Activated CD8-positive, alpha-beta memory T cell treated with anti-CD3 and anti-CD28 coated beads, Interleukin-2, amount 10 ng/mL, durations not matched to agents 7 days and 5 days (primary cell): ENCODE measurements at regions of chr19 and their contacts with region 1.

Region 1: GRCh38 chr19:18328340-18329034 is 5.6 kb upstream of the LSM4 start:
- DNase-seq: peak; percentile 95
- ATAC-seq: peak; percentile 100
- H3K4me3 Mint-ChIP-seq: peak overlapping the region; percentile 66
- H3K27ac Mint-ChIP-seq: peak overlapping the region; percentile 29
- H3K4me1 Mint-ChIP-seq: peaks cover 23% of the 10 kb centered on the region
- H3K27me3 Mint-ChIP-seq: no peaks in the 10 kb centered on the region

Region 2: DNA sequence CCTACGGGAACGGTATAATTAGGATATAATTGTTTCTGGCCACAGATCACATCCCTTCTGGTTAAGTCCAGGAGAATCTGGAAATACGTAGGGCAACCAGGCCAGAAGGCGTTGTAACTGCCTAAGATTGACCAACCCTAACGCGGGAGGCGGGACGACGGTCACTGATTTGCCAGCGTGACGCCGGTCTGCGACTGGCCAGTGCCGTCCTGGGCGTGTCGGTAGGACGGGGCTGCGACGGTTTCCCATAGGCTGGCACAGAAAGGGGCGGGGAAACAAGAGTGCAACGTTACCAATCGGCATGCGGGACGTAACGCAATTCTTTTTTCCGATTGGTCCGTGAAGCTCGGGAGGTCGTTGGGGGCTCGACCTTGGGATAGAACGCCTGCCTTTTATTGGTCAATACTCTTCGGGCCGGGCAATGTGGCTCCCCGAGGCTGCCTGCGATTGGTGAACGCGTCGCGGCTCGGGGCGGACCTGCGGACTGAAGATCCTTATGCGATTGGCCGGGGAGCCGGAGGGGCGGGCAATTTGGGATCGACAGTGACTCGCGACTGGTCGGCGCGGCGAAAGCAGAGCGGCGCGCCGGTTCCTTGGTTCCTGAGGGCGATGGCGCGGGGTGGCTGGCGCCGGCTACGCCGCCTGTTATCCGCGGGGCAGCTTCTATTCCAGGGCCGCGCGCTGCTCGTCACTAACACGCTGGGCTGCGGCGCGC is 135.7 kb before region 1 on chr19 and contains the start of gene MPV17L2:
- CTCF ChIA-PET with region 1: interaction called, 10 read pairs
- DNase-seq: peak; percentile 100
- ATAC-seq: peak; percentile 94
- H3K4me3 Mint-ChIP-seq: peak within 1 kb of the TSS; percentile 82
- H3K27ac Mint-ChIP-seq: peak within 1 kb of the TSS; percentile 93
- H3K4me1 Mint-ChIP-seq: peaks cover 28% of the 10 kb centered on the region
- H3K27me3 Mint-ChIP-seq: peaks cover 3% of the 10 kb centered on the region
- total RNA-seq, gene MPV17L2: 8.2 to 12.9 TPM

Region 3: DNA sequence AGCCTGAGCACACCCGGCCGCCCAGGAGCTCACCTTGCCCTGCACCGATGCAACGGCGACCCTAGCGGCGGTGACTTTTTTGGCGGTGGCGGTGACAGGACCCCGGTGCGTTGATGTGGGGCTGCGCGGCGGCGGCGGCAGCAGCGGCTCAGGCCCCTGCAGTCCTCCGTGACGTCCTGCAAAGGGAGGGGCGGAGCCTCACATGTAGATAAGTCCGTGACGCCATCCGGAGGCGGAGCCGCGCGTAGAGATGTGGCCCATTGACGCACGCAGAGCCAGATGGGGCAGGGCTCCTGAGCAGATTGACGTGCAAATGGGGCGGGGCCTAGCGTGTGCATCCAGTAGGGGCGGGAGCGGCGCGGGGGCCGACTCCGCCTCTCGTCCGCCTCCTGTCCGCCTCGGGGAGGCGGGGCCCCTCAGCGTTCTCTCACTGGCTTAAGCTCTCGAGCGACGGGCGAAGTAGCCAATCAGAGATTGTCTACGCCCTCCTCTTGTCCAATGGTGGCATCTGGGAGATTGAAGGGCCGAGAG is 124.6 kb before region 1 on chr19 and contains the start of gene RAB3A:
- CTCF ChIA-PET with region 1: interaction called, 19 read pairs
- DNase-seq: peak; percentile 100
- ATAC-seq: peak; percentile 93
- H3K4me3 Mint-ChIP-seq: peak within 1 kb of the TSS; percentile 83
- H3K27ac Mint-ChIP-seq: peak within 1 kb of the TSS; percentile 91
- H3K4me1 Mint-ChIP-seq: peaks cover 17% of the 10 kb centered on the region
- H3K27me3 Mint-ChIP-seq: peaks cover 5% of the 10 kb centered on the region
- total RNA-seq, gene RAB3A: 3.5 to 3.7 TPM

Region 4: DNA sequence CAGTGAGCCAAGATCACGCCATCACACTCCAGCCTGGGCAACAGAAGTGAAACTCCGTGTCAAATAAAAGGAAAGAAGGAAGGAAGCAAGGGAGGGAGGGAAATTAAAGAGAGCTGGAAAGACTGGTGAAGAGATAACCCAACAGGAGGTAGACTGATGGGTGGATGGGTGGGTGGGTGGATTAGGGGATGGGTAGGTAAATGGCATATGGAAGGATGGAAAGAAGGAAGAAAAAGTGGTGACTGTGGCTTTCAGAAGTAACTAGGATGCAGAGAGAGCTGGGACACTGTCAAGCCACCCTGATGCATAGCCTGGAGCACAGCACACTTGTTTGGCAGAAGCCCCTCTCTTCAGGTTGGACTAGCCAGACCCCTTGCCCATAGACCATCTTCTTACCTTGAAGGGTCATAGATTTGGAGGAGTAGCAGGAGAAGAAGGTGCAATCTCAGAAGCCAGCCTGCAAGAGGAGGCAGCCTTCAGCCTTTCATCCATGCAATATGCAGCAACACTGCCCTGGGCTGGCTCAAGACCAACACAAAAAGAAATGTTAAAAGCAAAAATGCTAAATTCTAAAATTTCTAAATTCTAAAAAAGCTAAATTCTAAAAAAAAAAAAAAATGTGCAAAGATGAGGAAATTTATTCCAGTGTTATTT is 59.3 kb before region 1 on chr19:
- CTCF ChIA-PET with region 1: interaction called, 13 read pairs
- DNase-seq: no peak
- ATAC-seq: no peak
- H3K4me3 Mint-ChIP-seq: no peak overlapping the region
- H3K27ac Mint-ChIP-seq: no peak overlapping the region
- H3K4me1 Mint-ChIP-seq: peaks cover 9% of the 10 kb centered on the region
- H3K27me3 Mint-ChIP-seq: no peaks in the 10 kb centered on the region

Region 5: GRCh38 chr19:18340190-18340989 is 11.9 kb after region 1 on chr19 and contains the start of gene PGPEP1:
- CTCF ChIA-PET with region 1: interaction called, 31 read pairs
- DNase-seq: peak; percentile 73
- ATAC-seq: peak; percentile 71
- H3K4me3 Mint-ChIP-seq: peak within 1 kb of the TSS; percentile 72
- H3K27ac Mint-ChIP-seq: peak within 1 kb of the TSS; percentile 84
- H3K4me1 Mint-ChIP-seq: peaks cover 17% of the 10 kb centered on the region
- H3K27me3 Mint-ChIP-seq: no peaks in the 10 kb centered on the region
- total RNA-seq, gene PGPEP1: 35.5 to 44.7 TPM

Region 6: DNA sequence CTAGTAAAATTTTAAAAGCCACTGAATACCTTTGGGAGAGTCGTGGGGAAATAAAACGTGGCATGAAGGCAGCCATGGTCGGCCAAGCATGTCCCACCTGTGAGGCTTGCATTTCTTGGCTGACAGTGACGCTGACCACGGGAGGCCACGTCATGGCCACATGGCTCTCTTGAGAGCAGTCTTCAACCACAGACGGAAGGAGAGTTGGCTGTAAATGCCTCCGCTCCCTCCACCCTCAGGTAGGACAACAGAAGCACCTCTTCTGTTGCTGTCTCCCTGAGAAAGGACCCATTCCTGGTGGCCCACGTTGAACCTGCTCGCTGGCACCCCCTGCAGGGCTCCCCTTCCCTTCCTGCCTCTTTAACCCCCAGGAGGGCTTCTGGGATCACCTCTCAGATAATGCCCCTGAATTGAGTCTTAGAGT is 79.6 kb after region 1 on chr19:
- CTCF ChIA-PET with region 1: interaction called, 23 read pairs
- DNase-seq: peak; percentile 48
- ATAC-seq: peak; percentile 12
- H3K4me3 Mint-ChIP-seq: no peak overlapping the region
- H3K27ac Mint-ChIP-seq: no peak overlapping the region
- H3K4me1 Mint-ChIP-seq: peaks cover 11% of the 10 kb centered on the region
- H3K27me3 Mint-ChIP-seq: peaks cover 4% of the 10 kb centered on the region